ENCODE measurements at regions of chr14 and their contacts with region 1.

Region 1: DNA sequence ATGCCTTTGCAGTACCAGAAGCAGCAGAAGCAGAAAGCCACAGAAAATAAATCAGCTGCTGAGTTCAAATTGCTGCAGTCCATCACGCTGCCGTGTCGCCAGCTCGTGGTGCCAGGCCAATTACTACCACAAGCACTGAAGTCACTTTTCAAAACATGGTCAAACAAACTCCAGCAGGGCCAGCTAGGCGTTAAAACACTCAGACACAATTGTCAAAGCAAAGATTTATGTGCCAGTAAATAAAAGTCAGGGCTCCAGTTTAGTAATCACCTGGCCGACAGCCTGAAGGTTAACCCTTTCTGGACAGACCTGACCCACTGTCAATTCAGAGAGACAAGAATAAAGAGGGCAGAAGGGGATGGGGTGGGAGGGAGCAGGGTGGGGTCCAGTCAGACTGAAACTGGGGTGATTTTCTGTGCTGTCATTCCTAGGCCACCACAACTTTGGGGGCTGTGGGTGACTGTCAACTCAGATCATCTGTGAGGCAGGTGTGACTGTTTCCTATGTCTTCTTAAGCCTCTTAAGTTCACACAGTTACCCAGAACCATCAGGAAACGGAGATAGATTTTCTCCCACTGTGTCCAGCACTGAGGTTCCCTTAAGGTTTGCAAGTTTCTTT is 109.8 kb upstream of the FUT8 start:
- DNase-seq: no peak
- H3K4me3 Mint-ChIP-seq: peak overlapping the region; percentile 2
- H3K27ac Mint-ChIP-seq: peak overlapping the region; percentile 83
- H3K4me1 Mint-ChIP-seq: peaks cover 64% of the 10 kb centered on the region
- H3K27me3 Mint-ChIP-seq: no peaks in the 10 kb centered on the region
- CTCF ChIP-seq: no peak

Region 2: GRCh38 chr14:65179918-65180724 is 122.6 kb before region 1 on chr14:
- CTCF ChIA-PET with region 1: interaction called, 3 read pairs
- intact Hi-C with region 1: loop called (anchors 5 kb)
- DNase-seq: peak; percentile 73
- H3K4me3 Mint-ChIP-seq: peak overlapping the region; percentile 2
- H3K27ac Mint-ChIP-seq: peak overlapping the region; percentile 88
- H3K4me1 Mint-ChIP-seq: peaks cover 32% of the 10 kb centered on the region
- H3K27me3 Mint-ChIP-seq: no peaks in the 10 kb centered on the region
- CTCF ChIP-seq: no peak

Region 3: GRCh38 chr14:65229751-65230749 is 72.6 kb before region 1 on chr14:
- CTCF ChIA-PET with region 1: no interaction called
- intact Hi-C with region 1: loop called (anchors 2 kb)
- DNase-seq: peak; percentile 76
- H3K4me3 Mint-ChIP-seq: peak overlapping the region; percentile 66
- H3K27ac Mint-ChIP-seq: peak overlapping the region; percentile 97
- H3K4me1 Mint-ChIP-seq: peaks cover 75% of the 10 kb centered on the region
- H3K27me3 Mint-ChIP-seq: no peaks in the 10 kb centered on the region
- CTCF ChIP-seq: no peak

Region 4: GRCh38 chr14:65255536-65256461 is 46.9 kb before region 1 on chr14:
- CTCF ChIA-PET with region 1: interaction called, 6 read pairs
- intact Hi-C with region 1: loop called (anchors 2 kb)
- DNase-seq: peak; percentile 89
- H3K4me3 Mint-ChIP-seq: peak overlapping the region; percentile 24
- H3K27ac Mint-ChIP-seq: peak overlapping the region; percentile 94
- H3K4me1 Mint-ChIP-seq: peaks cover 63% of the 10 kb centered on the region
- H3K27me3 Mint-ChIP-seq: no peaks in the 10 kb centered on the region
- CTCF ChIP-seq: no peak

Region 5: DNA sequence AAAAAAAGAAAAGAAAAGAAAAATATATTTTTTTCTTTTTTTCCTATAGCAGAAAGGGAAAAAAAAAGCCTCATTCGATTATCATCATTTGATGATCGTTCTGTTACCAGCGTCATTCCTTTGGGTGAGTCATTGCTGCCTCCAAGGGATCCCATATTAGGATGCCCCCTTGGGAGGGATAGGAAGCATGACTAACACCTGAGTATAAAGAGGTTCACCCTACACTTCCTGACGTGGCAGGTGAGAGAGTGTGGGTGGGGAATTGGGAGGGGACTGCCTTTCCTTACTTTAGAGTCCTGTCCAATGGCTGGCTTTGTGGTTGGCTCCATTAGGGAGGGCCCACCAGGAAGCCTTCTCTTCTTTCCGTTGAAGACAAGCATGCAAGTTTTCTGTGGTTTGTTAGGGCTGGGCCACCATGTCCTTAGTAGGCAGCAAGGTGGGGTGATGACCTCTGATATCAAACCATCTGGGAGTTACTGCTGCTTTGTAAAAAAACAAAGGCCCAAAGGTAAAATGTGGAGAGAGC is 53.7 kb after region 1 on chr14:
- CTCF ChIA-PET with region 1: interaction called, 5 read pairs
- intact Hi-C with region 1: loop called (anchors 2 kb)
- DNase-seq: peak; percentile 82
- H3K4me3 Mint-ChIP-seq: no peak overlapping the region
- H3K27ac Mint-ChIP-seq: peak overlapping the region; percentile 83
- H3K4me1 Mint-ChIP-seq: peaks cover 28% of the 10 kb centered on the region
- H3K27me3 Mint-ChIP-seq: no peaks in the 10 kb centered on the region
- CTCF ChIP-seq: no peak

Region 6: DNA sequence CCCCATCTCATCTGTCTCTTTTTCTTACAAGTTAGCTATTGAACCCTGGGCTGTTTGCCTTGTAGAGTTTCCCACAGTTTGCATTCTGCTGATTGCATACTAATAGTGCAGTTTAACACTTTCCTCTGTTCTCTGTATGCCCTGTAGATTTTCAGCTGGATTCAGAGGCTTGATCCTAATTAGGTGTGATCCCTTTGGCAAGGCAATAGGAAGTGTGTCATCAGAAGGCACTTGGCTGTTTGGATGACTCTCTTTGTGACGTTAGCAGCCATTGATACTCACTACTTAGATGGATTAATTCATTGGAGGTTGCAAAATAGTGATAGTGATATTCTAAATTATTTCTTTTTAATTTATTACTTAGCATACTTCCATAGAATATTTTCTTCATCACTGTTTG is 143.5 kb after region 1 on chr14:
- CTCF ChIA-PET with region 1: no interaction called
- intact Hi-C with region 1: no loop called
- DNase-seq: no peak
- H3K4me3 Mint-ChIP-seq: no peak overlapping the region
- H3K27ac Mint-ChIP-seq: no peak overlapping the region
- H3K4me1 Mint-ChIP-seq: peaks cover 24% of the 10 kb centered on the region
- H3K27me3 Mint-ChIP-seq: no peaks in the 10 kb centered on the region
- CTCF ChIP-seq: no peak

Measured in Calu3 (cell line).